AG04449 (cell line): ENCODE measurements at regions of chr13 and their contacts with region 1.

Region 1: GRCh38 chr13:49278211-49278610 is 30.5 kb downstream of the CDADC1 start:
- DNase-seq: no peak
- H3K4me3 ChIP-seq: no peak overlapping the region
- CTCF ChIP-seq: no peak

Region 2: GRCh38 chr13:49098771-49099512 is 179.3 kb before region 1 on chr13:
- CTCF ChIA-PET with region 1: interaction called, 26 read pairs
- POLR2A ChIA-PET with region 1: no interaction called
- DNase-seq: no peak
- H3K4me3 ChIP-seq: no peak overlapping the region
- CTCF ChIP-seq: no peak

Region 3: DNA sequence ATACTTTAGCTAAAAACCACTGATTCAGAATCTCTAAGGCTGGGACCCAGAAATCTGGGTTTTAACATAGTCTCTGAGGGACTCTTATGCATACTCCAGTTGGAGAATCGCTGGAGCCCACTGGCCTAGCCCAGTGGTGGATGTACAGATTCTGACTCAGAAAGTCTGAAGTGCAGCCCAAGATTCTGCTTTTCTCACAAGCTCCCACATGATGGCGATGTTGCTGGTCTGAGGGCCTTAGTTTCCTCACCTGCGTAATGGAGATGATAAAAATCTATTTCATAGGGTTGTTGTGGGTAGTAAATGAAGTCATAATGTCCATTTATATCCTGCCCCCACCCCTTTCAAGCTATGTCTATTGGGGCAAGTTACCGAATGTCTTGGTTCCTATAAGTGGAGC is 38.2 kb before region 1 on chr13:
- CTCF ChIA-PET with region 1: interaction called, 55 read pairs
- POLR2A ChIA-PET with region 1: no interaction called
- DNase-seq: no peak
- H3K4me3 ChIP-seq: no peak overlapping the region
- CTCF ChIP-seq: peak; percentile 50

Region 4: DNA sequence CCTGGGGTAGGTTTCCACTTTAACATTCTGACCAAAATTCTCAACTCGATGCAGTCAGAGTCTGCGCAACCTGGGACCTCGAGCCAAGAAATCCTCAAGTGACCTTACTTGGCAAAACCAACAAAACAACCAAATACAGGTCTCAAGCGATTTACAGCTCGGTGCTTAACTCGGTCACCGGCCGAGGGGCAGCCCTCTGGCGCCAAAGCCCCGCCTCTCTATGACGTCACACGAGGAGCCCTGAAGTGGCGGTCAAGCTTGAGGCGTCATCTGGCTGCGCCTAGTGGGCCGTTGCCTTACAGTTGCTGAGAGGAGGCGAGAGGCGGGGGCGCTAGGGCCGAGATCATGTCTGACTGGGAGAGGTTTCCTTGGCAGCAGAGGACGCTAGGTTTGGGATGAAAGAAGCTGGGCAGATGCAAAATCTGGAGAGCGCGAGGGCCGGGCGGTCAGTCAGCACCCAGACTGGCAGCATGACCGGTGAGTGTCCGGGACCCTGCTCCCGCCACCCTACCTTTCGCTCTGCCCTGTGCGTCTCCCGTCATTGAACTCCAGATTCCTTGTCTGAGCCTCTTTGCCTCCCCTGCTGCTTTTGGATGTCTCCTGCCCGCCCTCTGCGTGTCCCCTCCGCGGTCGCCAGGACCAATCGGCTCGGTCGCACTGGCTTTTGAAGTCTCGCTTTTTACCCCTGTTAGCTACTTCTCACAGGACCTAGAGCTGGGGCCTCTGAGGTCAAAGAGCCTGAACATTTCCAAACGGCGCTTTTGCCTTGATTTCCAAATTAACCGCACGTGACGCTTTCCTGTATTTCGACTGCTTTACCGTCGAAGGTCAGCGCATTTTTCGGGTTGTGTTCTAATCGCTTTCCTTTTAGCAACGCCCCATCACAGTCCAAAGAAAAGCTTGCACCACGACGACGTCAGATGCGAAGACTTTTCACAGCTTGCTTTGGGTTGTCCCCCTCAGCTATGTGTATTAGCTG is 30.3 kb before region 1 on chr13 and contains the start of gene CDADC1:
- CTCF ChIA-PET with region 1: interaction called, 28 read pairs
- POLR2A ChIA-PET with region 1: no interaction called
- DNase-seq: peak; percentile 56
- H3K4me3 ChIP-seq: peak within 1 kb of the TSS; percentile 97
- CTCF ChIP-seq: no peak

Region 5: GRCh38 chr13:49256841-49257240 is 21.4 kb before region 1 on chr13:
- CTCF ChIA-PET with region 1: interaction called, 24 read pairs
- POLR2A ChIA-PET with region 1: no interaction called
- DNase-seq: peak; percentile 21
- H3K4me3 ChIP-seq: no peak overlapping the region
- CTCF ChIP-seq: no peak

Region 6: DNA sequence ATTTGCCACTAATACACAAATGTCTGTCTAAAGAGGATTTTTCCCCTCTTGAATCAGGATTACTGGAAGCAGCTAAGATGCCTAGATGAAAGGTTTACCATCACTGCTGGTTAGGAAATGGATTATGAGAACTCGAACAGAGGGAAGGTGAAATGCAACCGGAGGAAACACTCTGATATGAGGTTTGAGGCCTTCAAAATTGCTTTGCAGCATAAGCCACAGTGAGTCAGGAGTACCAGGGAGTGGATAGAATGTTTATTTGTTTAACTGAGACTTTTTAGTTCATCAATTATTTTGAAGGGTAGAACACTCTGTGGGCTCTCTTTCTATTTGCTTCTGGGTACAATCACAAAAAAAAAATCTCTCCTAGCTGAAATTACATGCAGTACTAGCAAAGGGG is 12.4 kb before region 1 on chr13:
- CTCF ChIA-PET with region 1: interaction called, 53 read pairs
- POLR2A ChIA-PET with region 1: no interaction called
- DNase-seq: no peak
- H3K4me3 ChIP-seq: no peak overlapping the region
- CTCF ChIP-seq: no peak

Region 7: DNA sequence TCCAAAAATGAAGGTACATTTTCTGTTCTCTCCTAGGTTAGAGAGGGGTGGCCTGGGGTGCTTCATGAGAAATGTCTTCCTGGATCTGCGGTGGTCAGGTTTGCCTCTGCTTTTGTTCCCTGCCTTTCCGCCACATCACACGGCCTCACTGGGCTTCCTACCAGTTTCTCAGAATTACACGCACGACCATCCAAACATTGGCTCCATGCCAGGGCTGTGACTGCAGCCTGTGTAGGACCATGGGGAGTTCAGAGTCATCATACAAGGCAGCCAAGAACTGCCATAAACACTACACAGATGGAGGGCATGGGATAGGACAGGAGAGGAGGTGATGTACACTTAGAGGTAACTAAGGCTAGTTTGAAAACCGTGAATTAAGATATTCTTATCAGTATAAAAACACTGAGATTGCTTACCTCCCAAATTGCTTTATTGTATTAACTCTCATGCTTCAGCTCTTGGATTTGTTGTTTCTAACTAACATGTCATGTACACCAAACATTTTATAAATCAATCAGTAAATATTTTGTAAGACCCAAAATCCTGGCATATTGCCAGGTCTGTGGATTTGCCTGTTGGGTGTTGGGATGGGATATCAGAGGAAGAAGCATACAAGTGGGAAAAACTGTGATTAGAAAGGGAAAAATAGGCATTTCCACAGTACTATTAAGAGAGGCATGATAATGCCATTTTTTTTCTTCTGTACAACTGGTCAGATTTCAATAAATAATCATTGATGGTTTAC is 14.7 kb after region 1 on chr13:
- CTCF ChIA-PET with region 1: interaction called, 35 read pairs
- POLR2A ChIA-PET with region 1: no interaction called
- DNase-seq: no peak
- H3K4me3 ChIP-seq: no peak overlapping the region
- CTCF ChIP-seq: no peak